ENCODE measurements at regions of chr16 and their contacts with region 1.

Region 1: DNA sequence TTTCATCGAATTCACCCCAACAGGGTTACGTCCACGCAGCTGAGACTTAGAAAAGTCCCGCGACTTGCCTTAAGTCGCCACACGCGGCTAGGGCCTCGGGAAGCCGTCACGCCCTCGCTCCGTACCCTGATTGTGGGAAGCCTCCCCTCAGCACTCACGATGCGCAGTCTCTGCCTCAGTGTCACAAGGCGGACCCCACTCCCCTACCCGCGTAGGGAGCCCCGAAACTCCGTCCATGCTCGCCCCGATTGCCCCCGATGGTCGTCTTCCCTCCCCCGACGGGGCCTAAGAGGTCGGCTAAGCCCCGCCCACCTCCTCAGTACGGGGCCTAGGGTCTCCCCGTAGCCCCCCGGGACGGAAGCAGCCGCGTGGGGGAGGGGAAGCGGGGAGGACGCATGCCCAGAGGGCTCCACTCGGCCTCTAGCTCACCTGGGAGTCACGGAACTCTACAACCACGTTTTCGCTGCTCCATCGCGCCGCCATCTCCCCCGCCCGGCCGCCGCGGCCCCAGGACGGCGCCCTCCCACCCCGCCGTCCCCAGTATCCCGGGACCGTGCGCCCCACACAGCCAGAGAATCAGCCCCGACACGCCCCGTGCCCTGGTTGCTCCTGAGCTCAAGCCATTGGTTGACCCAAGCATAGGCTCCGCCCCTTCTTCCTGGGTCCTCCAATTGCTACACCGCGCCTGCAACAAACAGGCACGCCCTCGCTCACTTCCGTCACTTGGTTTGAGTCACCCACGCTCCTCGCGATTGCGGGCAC is at the start of gene WDR59:
- DNase-seq: peak; percentile 95
- H3K4me3 ChIP-seq: peak within 1 kb of the TSS; percentile 94
- H3K27me3 ChIP-seq: no peaks in the 10 kb centered on the region
- CTCF ChIP-seq: no peak
- polyA plus RNA-seq, gene WDR59: 36.7 and 47.5 TPM in 2 replicates

Region 2: GRCh38 chr16:75044800-75045430 is 60.2 kb after region 1 on chr16:
- CTCF ChIA-PET with region 1: no interaction called
- POLR2A ChIA-PET with region 1: interaction called, 16 read pairs
- DNase-seq: peak; percentile 70
- H3K4me3 ChIP-seq: no peak overlapping the region
- H3K27me3 ChIP-seq: no peaks in the 10 kb centered on the region
- CTCF ChIP-seq: no peak

Measured in BJ (cell line).